ENCODE measurements at regions of chr13 and their contacts with region 1.

Region 1: DNA sequence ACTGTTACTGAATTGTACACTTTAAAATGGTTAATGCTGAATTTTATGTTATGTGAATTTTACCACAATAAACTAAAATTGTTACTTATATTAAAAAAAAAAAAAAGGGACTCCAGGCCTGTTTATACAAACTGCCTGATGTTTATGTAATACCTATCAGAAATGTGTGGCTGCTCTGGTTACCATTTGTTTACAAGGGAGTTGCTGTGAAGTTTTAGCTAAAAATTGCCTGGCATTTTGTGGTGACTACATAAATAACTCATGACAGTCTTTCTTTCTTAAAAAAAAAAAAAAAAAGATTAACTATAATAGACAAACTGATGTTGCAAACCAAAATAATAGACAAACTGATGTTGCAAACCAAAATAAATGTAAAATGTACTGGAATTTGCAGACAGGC is 71.8 kb downstream of the CDADC1 start:
- DNase-seq: no peak
- ATAC-seq: no peak
- H3K4me3 ChIP-seq: no peak overlapping the region
- H3K27ac ChIP-seq: no peak overlapping the region
- H3K4me1 ChIP-seq: no peaks in the 10 kb centered on the region
- H3K27me3 ChIP-seq: no peaks in the 10 kb centered on the region

Region 2: GRCh38 chr13:49132479-49133002 is 187.0 kb before region 1 on chr13:
- intact Hi-C with region 1: no loop called
- DNase-seq: no peak
- ATAC-seq: no peak
- H3K4me3 ChIP-seq: no peak overlapping the region
- H3K27ac ChIP-seq: no peak overlapping the region
- H3K4me1 ChIP-seq: no peaks in the 10 kb centered on the region
- H3K27me3 ChIP-seq: no peaks in the 10 kb centered on the region

Region 3: DNA sequence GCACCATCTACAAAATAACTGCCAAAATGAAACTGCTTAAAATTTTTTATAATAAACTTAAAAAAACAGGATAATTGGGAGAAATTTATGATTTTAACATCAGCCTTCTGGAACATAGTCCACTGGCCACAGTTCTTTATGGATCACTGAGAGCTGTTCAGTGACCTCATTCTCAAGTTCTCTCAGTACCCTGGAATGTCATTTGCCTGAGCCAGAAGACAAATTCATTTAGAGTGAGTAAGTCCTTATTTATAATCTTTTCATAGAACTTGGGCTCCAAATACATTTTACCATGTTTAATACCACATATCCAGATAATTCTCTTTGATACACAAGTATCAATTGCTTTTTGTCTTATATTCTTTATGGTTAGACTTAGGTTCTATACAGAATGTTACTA is 36.7 kb after region 1 on chr13:
- intact Hi-C with region 1: loop called (anchors 5 kb)
- DNase-seq: no peak
- ATAC-seq: peak; percentile 90
- H3K4me3 ChIP-seq: no peak overlapping the region
- H3K27ac ChIP-seq: peak overlapping the region in 1 of 2 donors; percentile 82
- H3K4me1 ChIP-seq: peaks cover 4 to 5% of the 10 kb centered on the region in 2 donors
- H3K27me3 ChIP-seq: no peaks in the 10 kb centered on the region

Region 4: DNA sequence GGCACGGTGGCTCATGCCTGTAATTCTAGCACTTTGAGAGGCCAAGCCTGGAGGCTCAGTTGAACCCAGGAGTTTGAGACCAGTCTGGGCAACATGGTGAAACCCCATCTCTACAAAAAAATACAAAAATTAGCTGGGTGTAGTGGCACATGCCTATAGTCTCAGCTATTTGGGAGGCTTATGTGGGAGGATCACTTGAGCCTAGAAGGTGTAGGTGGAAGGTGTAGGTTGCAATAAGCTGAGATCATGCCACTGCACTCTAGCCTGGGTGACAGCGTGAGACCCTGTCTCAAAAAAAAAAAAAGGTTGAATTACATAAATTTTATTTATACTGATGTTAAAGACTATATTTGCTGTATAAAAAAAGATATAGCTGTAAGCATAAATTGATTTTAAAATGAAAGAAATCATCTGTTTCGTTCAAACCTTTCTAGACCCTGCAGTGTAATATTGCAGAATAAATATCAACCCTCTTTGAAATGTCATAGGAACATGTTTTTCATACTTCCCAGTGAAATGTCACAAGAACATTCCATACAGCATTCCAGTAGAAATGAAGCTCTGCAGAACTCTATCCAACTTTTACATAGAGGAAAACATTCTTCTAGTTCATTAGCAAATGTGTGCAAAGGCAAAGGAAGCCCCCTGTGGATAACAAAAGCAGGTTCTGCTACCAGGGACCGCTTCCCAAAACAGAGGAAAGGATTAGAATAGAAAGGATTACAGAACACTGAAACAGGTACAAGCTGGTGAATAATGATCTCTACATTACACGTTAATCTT is 48.3 kb after region 1 on chr13:
- intact Hi-C with region 1: loop called in 1 of 2 experiments (anchors 5 kb)
- DNase-seq: no peak
- ATAC-seq: no peak
- H3K4me3 ChIP-seq: peak overlapping the region in 1 of 2 donors; percentile 26
- H3K27ac ChIP-seq: peak overlapping the region; percentile 22 to 51
- H3K4me1 ChIP-seq: peaks cover 5 to 7% of the 10 kb centered on the region in 2 donors
- H3K27me3 ChIP-seq: no peaks in the 10 kb centered on the region

Region 5: DNA sequence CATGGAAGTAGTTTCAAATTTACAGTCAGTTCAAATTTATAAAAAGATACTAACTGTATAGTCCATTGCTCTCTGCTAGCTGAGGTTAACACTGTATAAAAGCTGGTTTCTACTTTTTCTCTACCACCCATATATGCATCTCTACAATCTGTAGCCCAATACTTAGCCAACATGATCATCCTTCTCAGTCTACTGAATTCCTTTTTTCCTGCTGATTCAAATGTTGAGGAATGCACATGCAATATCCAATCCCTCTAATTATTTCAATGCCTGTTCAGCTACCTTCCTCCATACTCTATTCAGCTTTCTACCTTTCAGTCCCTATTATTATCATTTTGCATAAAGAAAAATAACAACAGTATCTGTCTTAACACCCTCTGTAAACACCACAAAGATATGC is 457.3 kb after region 1 on chr13:
- intact Hi-C with region 1: no loop called
- DNase-seq: no peak
- ATAC-seq: no peak
- H3K4me3 ChIP-seq: no peak overlapping the region
- H3K27ac ChIP-seq: no peak overlapping the region
- H3K4me1 ChIP-seq: no peaks in the 10 kb centered on the region
- H3K27me3 ChIP-seq: no peaks in the 10 kb centered on the region

Measured in aorta (tissue), 5 donors.